GM12878 (cell line): ENCODE measurements at regions of chr1 and their contacts with region 1.

Region 1: GRCh38 chr1:24830680-24831272 is 85.5 kb downstream of the CLIC4 start:
- DNase-seq: no peak
- ATAC-seq: peak; percentile 94
- H3K4me3 ChIP-seq: no peak overlapping the region
- H3K27ac ChIP-seq: no peak overlapping the region
- H3K4me1 ChIP-seq: peaks cover 3% of the 10 kb centered on the region; the same call in 1 of the 2 replicates
- H3K27me3 ChIP-seq: no peaks in the 10 kb centered on the region
- CTCF ChIP-seq: peak; percentile 70 to 89 (median 79)
- EP300 ChIP-seq: no peak
- POLR2A ChIP-seq: no peak
- RAD21 ChIP-seq: peak; percentile 88

Region 2: DNA sequence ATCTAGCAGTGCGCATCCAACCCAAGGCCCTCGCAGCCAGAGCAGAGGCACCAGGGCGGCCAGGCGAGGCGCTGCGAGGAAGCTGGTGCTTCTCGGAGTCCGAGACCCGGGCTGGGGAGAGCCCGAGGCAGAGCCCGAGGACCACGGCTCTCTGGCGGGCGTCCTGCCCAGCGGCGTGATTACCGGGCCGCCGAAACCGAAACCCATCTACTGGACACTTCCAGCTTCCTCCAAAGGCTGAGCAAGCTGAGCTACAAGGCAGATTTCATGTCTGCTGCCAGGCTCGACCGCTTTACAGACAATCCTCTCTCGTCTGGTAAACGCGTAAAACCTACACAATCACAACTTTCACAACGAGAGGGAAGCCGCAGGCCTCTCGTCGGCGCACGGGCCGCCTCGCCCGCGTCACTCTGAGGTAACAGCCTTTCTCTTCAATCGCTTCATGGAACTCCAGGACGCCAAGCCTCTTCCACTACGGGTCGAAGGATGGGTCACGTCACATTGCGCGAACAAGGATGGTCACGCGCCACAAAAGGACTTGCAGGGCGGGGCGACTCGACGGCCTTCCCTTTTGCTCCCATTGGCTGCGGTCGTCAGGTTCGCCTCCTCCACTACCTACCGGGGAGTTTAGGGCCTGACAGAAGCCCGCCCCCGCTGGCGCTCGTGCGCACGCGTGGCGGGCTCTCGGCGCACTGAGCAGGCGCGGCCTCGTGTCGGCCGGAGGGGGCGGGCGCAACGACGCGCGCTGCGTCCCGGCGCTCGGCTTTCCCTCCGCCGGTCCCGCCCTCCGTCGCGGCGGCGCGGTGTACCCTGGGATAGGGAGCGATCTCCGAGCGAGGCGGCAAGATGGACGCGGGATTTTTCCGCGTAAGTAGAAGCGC is 188.1 kb before region 1 on chr1 and contains the start of gene SRRM1:
- CTCF ChIA-PET with region 1: interaction called, 11 read pairs
- POLR2A ChIA-PET with region 1: interaction called, 5 read pairs
- RAD21 ChIA-PET with region 1: interaction called, 7 read pairs
- SMC1A ChIA-PET with region 1: interaction called, 8 read pairs
- in situ Hi-C with region 1: no loop called
- intact Hi-C with region 1: no loop called
- DNase-seq: peak; percentile 98
- ATAC-seq: peak; percentile 93
- H3K4me3 ChIP-seq: peak within 1 kb of the TSS; percentile 94
- H3K27ac ChIP-seq: peak within 1 kb of the TSS; percentile 99
- H3K4me1 ChIP-seq: peaks cover 9% of the 10 kb centered on the region
- H3K27me3 ChIP-seq: no peaks in the 10 kb centered on the region
- CTCF ChIP-seq: peak in 2 of 3 experiments; percentile 13 to 20; a peak in 2 of 6 replicates
- EP300 ChIP-seq: peak in 1 of 2 experiments; percentile 52; a peak in 1 of 4 replicates
- POLR2A ChIP-seq: peak; percentile 93
- RAD21 ChIP-seq: no peak
- polyA plus RNA-seq, gene SRRM1: 139 to 269 TPM

Region 3: DNA sequence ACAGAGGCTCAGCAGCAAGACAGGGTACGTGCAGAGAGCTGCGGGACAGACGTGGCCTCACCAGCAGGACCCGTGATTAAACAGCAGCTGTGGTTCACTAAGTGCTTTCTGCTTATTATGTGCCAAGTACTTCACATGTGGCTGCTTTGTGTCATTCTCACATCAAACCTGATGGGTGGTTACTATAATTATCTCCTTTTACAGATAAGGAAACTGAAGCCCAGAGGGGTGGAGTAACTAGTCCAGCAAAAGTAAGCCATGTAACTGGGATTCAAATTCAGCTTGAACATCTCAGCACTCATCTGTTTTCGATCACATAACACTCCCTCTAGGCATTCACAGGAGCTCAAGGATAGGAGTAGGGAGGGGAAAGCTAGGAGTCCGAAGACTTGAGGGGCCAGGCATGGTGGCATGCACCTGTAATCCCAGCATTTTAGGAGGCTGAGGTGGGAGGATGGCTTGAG is 136.4 kb before region 1 on chr1:
- CTCF ChIA-PET with region 1: interaction called, 655 read pairs
- POLR2A ChIA-PET with region 1: interaction called, 13 read pairs
- RAD21 ChIA-PET with region 1: interaction called, 377 read pairs
- SMC1A ChIA-PET with region 1: interaction called, 412 read pairs
- in situ Hi-C with region 1: loop called (anchors 5 kb)
- intact Hi-C with region 1: loop called (anchors 2 kb)
- DNase-seq: peak; percentile 79
- ATAC-seq: peak; percentile 94
- H3K4me3 ChIP-seq: no peak overlapping the region
- H3K27ac ChIP-seq: peak overlapping the region; percentile 43; the same call in 1 of the 2 replicates
- H3K4me1 ChIP-seq: peaks cover 27% of the 10 kb centered on the region
- H3K27me3 ChIP-seq: no peaks in the 10 kb centered on the region
- CTCF ChIP-seq: no peak
- EP300 ChIP-seq: peak; percentile 35 to 71; a peak in 3 of 4 replicates
- POLR2A ChIP-seq: peak; percentile 58
- RAD21 ChIP-seq: no peak

Region 4: GRCh38 chr1:24744911-24745710 is 85.7 kb before region 1 on chr1 and contains the start of gene CLIC4:
- CTCF ChIA-PET with region 1: interaction called, 34 read pairs
- POLR2A ChIA-PET with region 1: interaction called, 12 read pairs
- RAD21 ChIA-PET with region 1: interaction called, 120 read pairs
- SMC1A ChIA-PET with region 1: interaction called, 107 read pairs
- in situ Hi-C with region 1: no loop called
- intact Hi-C with region 1: loop called (anchors 2 kb)
- DNase-seq: peak; percentile 94
- ATAC-seq: peak; percentile 78
- H3K4me3 ChIP-seq: peak within 1 kb of the TSS; percentile 77
- H3K27ac ChIP-seq: peak within 1 kb of the TSS; percentile 76
- H3K4me1 ChIP-seq: peaks cover 34% of the 10 kb centered on the region
- H3K27me3 ChIP-seq: no peaks in the 10 kb centered on the region
- CTCF ChIP-seq: peak in 2 of 3 experiments; percentile 18 to 72; a peak in 3 of 6 replicates
- EP300 ChIP-seq: peak; percentile 34 to 64; a peak in 2 of 4 replicates
- POLR2A ChIP-seq: peak; percentile 91
- RAD21 ChIP-seq: no peak; the same call in 1 of the 2 replicates
- polyA plus RNA-seq, gene CLIC4: 20.4 to 26.5 TPM

Region 5: GRCh38 chr1:24775916-24776315 is 54.9 kb before region 1 on chr1:
- CTCF ChIA-PET with region 1: interaction called, 42 read pairs
- POLR2A ChIA-PET with region 1: interaction called, 3 read pairs
- RAD21 ChIA-PET with region 1: interaction called, 8 read pairs
- SMC1A ChIA-PET with region 1: interaction called, 9 read pairs
- in situ Hi-C with region 1: no loop called
- intact Hi-C with region 1: no loop called
- DNase-seq: no peak
- ATAC-seq: peak; percentile 31; the same call in 1 of the 3 replicates
- H3K4me3 ChIP-seq: no peak overlapping the region
- H3K27ac ChIP-seq: no peak overlapping the region
- H3K4me1 ChIP-seq: no peaks in the 10 kb centered on the region
- H3K27me3 ChIP-seq: no peaks in the 10 kb centered on the region
- CTCF ChIP-seq: no peak
- EP300 ChIP-seq: no peak
- POLR2A ChIP-seq: no peak
- RAD21 ChIP-seq: no peak